ENCODE measurements at regions of chr15 and their contacts with region 1.

Region 1: GRCh38 chr15:91942676-91943576 is 89.4 kb downstream of the SLCO3A1 start:
- DNase-seq: peak; percentile 85 to 90 (median 87)
- ATAC-seq: peak; percentile 85 to 88
- H3K4me3 ChIP-seq: no peak overlapping the region
- H3K27ac ChIP-seq: peak overlapping the region; percentile 43
- H3K4me1 ChIP-seq: peaks cover 48% of the 10 kb centered on the region
- H3K27me3 ChIP-seq: no peaks in the 10 kb centered on the region

Region 2: DNA sequence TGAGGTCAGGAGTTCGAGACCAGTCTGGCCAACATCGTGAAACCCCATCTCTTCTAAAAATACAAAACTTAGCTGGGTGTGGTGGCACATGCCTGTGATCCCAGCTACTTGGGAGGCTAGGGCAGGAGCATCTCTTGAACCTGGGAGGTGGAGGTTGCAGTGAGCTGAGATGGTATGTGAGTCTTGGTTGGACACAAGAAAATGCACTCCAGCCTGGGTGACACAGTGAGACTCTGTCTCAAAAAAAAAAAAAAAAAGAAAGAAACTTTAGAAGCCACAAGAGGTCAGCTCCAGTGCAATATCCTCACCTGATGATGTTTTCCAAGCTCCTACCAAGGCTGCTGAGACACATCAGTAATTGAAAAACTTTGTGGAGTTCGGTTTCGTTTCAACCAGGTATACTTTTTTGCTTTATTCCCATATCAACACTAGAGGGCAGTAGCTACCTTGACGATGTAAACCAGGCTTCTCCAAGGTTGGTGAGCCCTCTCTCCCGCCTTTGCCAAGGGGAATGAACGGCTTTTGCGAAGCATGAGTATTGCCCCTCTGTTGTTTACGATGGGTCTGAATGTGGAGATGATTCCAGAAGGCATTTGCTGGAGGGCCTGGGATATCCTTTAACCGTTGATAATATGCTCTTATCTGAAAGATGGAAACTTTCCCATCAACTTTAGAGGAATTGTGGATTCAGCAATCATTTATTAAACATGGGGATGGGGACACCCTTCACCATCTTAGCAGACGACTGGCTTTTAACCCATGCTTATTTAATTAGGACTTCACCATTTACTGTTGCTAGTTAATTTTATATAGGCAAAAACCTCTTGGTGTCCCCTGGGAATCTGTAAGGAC is 640.1 kb before region 1 on chr15:
- intact Hi-C with region 1: loop called in 1 of 4 experiments (anchors 10 kb)
- DNase-seq: peak in 2 of 3 donors; percentile 39 to 50
- ATAC-seq: peak; percentile 77 to 88
- H3K4me3 ChIP-seq: no peak overlapping the region
- H3K27ac ChIP-seq: no peak overlapping the region
- H3K4me1 ChIP-seq: no peaks in the 10 kb centered on the region
- H3K27me3 ChIP-seq: no peaks in the 10 kb centered on the region

Region 3: DNA sequence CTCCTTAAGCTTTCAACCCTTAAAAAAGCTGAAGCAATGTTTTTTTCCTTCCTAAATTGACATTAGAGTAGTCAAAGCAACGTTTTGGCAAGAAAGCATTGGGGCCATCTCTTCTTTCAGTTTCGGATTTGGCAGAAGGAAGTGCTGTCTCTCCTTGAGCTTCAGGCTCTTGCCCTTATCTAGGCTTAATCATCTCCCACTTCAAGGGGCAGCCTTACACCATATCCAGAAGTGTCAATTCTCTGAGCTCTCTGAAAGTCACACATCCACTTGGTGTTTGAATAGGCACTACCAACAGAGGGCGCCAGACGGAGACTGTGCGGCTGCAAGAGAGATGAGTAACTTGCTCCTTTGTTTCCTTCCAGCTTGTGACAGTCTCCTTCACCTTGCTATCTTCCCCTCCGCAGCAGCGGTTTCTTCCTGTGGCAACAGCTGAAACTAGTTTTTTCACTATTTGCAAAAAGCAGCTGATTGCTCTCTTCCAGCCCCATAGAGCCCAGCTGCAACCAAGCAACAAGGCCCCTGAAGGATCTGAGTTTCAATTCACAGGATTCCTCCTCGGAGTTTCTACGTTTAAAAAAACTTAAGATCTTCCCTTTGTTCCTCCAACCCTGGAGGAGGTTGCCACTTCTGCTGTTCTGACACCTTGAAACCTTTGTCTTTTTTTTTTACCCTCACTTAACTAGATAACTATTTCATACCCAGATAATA is 236.4 kb before region 1 on chr15:
- intact Hi-C with region 1: loop called in 1 of 4 experiments (anchors 10 kb)
- DNase-seq: peak; percentile 78 to 80 (median 79)
- ATAC-seq: peak; percentile 85 to 87
- H3K4me3 ChIP-seq: no peak overlapping the region
- H3K27ac ChIP-seq: no peak overlapping the region
- H3K4me1 ChIP-seq: peaks cover 4% of the 10 kb centered on the region
- H3K27me3 ChIP-seq: no peaks in the 10 kb centered on the region

Region 4: GRCh38 chr15:91852741-91853510 is 90.0 kb before region 1 on chr15:
- intact Hi-C with region 1: loop called in 1 of 4 experiments (anchors 10 kb)
- DNase-seq: peak; percentile 85 to 93 (median 92)
- ATAC-seq: peak; percentile 88 to 90
- H3K4me3 ChIP-seq: peak overlapping the region; percentile 81
- H3K27ac ChIP-seq: peak overlapping the region; percentile 94
- H3K4me1 ChIP-seq: peaks cover 22% of the 10 kb centered on the region
- H3K27me3 ChIP-seq: no peaks in the 10 kb centered on the region

Region 5: DNA sequence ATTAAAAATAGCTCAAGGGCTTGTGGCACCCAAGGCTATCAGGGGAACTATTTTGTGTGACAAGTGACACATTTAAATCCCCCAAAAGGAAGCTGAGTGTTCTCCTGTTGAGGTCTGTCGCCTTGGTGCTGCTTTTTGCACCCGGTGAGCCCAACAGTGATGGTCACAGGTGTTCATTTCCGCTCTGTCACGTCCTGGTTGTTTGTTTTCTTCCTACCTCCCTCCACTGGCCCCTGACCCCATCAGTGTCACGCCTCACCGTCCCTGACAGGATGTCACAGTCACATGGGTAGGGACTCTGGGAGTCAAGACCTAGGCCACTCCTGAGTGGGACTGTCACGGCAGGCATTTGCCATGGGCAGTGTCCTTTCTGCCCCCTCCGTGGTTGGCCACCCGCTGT is 78.3 kb before region 1 on chr15:
- intact Hi-C with region 1: loop called in 2 of 4 experiments (anchors 5 to 10 kb)
- DNase-seq: peak in 2 of 3 donors; percentile 61 to 74
- ATAC-seq: peak; percentile 5 to 9
- H3K4me3 ChIP-seq: no peak overlapping the region
- H3K27ac ChIP-seq: peak overlapping the region; percentile 94
- H3K4me1 ChIP-seq: peaks cover 25% of the 10 kb centered on the region
- H3K27me3 ChIP-seq: no peaks in the 10 kb centered on the region

Region 6: DNA sequence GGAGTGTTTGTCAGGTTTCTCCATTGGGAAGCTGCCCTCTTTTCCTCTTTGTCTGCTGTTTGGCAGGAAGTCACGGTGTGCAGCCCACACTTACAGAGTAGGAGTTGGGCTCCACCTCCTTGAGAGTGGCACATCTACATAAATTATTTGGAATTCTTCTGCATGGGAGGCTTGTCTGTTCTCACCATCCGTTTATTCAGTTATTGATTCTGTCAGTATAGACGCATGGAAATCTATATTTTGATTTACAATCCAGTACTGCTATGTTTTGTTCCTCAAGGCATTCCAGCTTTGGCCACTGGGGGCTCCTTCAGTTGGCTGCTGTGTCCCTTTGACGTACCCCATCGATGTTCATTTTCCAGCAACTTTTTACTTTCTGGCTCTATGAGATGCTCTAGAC is 110.9 kb after region 1 on chr15:
- intact Hi-C with region 1: no loop called
- DNase-seq: no peak
- ATAC-seq: no peak
- H3K4me3 ChIP-seq: no peak overlapping the region
- H3K27ac ChIP-seq: no peak overlapping the region
- H3K4me1 ChIP-seq: peaks cover 33% of the 10 kb centered on the region
- H3K27me3 ChIP-seq: no peaks in the 10 kb centered on the region